Activated CD8-positive, alpha-beta T cell treated with anti-CD3 and anti-CD28 coated beads for 36 hours (primary cell): ENCODE measurements at regions of chr6 and their contacts with region 1.

Region 1: DNA sequence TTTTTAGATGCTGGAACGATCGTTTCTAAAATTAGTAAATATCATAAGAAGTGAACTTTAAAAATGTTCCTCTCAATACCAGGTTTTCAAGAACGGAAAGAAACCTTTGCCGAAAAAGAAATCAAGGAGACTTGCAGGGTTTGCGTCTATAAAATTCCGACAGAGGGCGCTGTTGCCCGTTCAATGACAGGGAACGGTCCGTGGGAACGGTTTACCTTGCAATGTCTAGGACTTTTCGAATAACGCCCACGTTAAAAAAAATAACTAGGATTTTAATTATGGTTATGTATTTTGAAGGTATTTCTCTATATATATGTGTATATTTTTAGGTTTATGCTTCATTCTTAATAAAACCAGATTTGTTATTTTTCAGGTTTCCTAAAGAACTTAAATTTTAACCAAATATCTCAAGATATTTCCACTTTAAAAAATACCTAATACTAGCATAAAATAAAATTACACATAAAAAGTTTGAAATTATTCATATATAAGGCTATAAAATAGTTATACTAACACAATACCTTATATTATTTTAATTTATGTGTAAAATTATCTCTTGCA is 2.5 kb upstream of the TFAP2B start:
- DNase-seq: peak; percentile 76
- ATAC-seq: peak; percentile 34
- H3K4me3 Mint-ChIP-seq: peak overlapping the region; percentile 79
- H3K27ac Mint-ChIP-seq: no peak overlapping the region
- H3K4me1 Mint-ChIP-seq: peaks cover 11% of the 10 kb centered on the region
- H3K27me3 Mint-ChIP-seq: peaks cover 56% of the 10 kb centered on the region
- CTCF ChIP-seq: peak; percentile 81

Region 2: GRCh38 chr6:50720623-50721022 is 95.6 kb before region 1 on chr6:
- CTCF ChIA-PET with region 1: no interaction called
- POLR2A ChIA-PET with region 1: no interaction called
- intact Hi-C with region 1: loop called (anchors 10 kb)
- DNase-seq: no peak
- ATAC-seq: no peak
- H3K4me3 Mint-ChIP-seq: no peak overlapping the region
- H3K27ac Mint-ChIP-seq: no peak overlapping the region
- H3K4me1 Mint-ChIP-seq: no peaks in the 10 kb centered on the region
- H3K27me3 Mint-ChIP-seq: peaks cover 66% of the 10 kb centered on the region
- CTCF ChIP-seq: no peak

Region 3: DNA sequence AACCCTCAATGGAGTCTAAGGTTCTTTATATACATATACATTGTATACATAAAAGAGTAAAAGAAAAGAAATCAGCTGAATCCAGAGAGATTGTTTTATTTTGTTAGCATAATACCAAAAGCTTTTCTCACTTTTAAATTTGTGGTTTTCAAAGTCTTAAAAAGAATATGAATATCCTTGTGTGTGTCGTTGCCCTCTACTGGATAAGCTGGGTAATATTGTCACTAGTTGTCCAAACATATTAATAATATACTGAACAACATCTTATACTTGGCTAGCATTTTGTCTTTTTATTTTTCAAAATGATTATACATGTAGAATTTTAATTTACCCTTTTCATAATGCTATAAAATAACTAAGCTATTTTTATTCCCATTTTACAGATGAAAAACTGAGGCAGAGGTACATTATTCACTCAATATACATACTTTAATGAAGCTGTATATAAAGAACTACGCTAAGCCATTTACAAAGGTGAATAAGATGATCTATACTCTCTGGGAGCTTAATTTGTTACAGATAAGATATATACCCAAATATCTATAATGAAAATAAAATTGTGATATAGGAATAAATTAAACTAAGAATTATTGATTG is 534.2 kb after region 1 on chr6:
- CTCF ChIA-PET with region 1: interaction called, 3 read pairs
- POLR2A ChIA-PET with region 1: no interaction called
- intact Hi-C with region 1: loop called (anchors 5 kb)
- DNase-seq: no peak
- ATAC-seq: no peak
- H3K4me3 Mint-ChIP-seq: no peak overlapping the region
- H3K27ac Mint-ChIP-seq: no peak overlapping the region
- H3K4me1 Mint-ChIP-seq: no peaks in the 10 kb centered on the region
- H3K27me3 Mint-ChIP-seq: no peaks in the 10 kb centered on the region
- CTCF ChIP-seq: peak; percentile 57